Activated CD4-positive, alpha-beta memory T cell treated with anti-CD3 and anti-CD28 coated beads for 36 hours (primary cell): ENCODE measurements at regions of chr16 and their contacts with region 1.

Region 1: DNA sequence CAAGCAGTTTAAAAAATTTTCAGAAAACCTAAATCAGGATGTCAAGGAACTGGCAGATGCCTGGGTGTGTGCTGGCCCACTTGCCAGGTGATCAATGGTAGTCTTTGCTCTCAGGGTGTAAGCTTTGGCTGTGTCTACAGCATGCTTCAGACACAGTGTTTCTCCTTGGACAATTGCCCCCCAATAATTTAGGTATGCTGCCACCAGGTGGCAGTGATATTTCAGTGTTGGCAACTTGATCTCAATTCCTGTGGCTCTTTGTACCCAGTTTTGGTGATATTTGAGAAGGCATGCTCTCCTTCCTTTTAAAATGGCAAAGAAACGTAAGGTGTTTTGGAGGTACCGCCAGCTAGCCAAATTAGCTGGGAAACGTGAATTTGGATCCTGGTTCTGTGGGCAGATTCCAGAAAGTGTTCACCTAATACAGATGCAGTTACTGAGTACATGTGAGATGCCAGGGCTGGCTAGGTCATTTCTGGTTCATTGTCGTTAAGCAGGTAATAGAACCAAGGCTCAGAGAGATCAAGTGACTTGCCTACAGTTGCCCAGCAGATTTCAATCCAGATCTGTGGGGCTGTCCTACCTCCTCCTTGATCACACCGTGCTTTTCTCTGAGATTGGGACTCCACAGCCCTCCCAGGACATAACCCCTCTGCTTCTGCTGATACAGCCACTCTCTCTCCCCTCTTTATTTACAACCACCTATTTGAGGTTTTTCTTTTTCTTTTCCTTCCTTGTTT is 155.6 kb upstream of the PLCG2 start:
- DNase-seq: peak; percentile 73
- H3K4me3 Mint-ChIP-seq: no peak overlapping the region
- H3K27ac Mint-ChIP-seq: peak overlapping the region; percentile 8
- H3K4me1 Mint-ChIP-seq: peaks cover 9% of the 10 kb centered on the region
- H3K27me3 Mint-ChIP-seq: no peaks in the 10 kb centered on the region

Region 2: DNA sequence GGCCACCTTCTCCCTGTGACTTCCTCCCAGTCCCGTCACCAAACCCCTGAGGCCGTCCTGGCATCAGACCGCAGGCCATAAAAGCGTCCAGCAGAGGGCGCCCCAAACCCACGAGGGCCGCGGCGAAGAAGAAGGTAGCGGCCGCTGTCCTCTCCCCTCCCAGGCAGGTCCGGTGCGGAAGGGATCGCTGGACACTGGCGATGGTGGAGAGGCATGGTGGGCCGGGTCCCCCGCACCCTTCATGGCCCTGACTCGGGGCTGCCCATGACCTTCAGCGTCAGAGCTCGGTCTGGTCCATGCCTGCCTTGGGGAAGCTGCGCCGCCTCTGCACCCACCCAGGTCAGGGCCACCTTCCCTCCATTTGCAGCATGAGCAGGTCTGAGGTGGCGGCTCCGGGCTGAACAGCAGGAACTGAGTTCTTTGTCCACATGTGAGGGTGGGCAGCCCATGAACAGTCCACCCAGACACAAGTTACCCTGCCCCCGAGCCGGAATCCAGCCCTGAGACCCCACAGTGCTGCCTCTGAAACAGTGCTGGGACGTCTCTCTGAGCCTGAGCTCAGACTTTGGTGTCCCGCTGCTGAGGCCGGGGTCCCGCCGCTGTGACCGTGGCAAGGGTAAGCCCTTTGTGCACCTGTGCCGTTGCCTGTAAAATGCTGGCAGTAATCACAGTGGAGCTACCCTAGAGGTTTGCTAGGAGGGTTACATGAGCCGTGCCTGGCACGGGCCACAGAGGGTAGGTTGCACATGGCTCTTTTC is 219.7 kb before region 1 on chr16:
- CTCF ChIA-PET with region 1: interaction called, 15 read pairs
- POLR2A ChIA-PET with region 1: no interaction called
- intact Hi-C with region 1: no loop called
- DNase-seq: peak; percentile 89
- H3K4me3 Mint-ChIP-seq: no peak overlapping the region
- H3K27ac Mint-ChIP-seq: no peak overlapping the region
- H3K4me1 Mint-ChIP-seq: no peaks in the 10 kb centered on the region
- H3K27me3 Mint-ChIP-seq: no peaks in the 10 kb centered on the region

Region 3: GRCh38 chr16:81595604-81596292 is 27.8 kb before region 1 on chr16:
- CTCF ChIA-PET with region 1: interaction called, 3 read pairs
- POLR2A ChIA-PET with region 1: no interaction called
- intact Hi-C with region 1: loop called (anchors 1 kb)
- DNase-seq: no peak
- H3K4me3 Mint-ChIP-seq: no peak overlapping the region
- H3K27ac Mint-ChIP-seq: peak overlapping the region; percentile 78
- H3K4me1 Mint-ChIP-seq: peaks cover 12% of the 10 kb centered on the region
- H3K27me3 Mint-ChIP-seq: no peaks in the 10 kb centered on the region

Region 4: GRCh38 chr16:81715358-81716196 is 92.0 kb after region 1 on chr16:
- CTCF ChIA-PET with region 1: interaction called, 30 read pairs
- POLR2A ChIA-PET with region 1: no interaction called
- intact Hi-C with region 1: no loop called
- DNase-seq: peak; percentile 40
- H3K4me3 Mint-ChIP-seq: peak overlapping the region; percentile 34
- H3K27ac Mint-ChIP-seq: peak overlapping the region; percentile 57
- H3K4me1 Mint-ChIP-seq: peaks cover 44% of the 10 kb centered on the region
- H3K27me3 Mint-ChIP-seq: no peaks in the 10 kb centered on the region

Region 5: DNA sequence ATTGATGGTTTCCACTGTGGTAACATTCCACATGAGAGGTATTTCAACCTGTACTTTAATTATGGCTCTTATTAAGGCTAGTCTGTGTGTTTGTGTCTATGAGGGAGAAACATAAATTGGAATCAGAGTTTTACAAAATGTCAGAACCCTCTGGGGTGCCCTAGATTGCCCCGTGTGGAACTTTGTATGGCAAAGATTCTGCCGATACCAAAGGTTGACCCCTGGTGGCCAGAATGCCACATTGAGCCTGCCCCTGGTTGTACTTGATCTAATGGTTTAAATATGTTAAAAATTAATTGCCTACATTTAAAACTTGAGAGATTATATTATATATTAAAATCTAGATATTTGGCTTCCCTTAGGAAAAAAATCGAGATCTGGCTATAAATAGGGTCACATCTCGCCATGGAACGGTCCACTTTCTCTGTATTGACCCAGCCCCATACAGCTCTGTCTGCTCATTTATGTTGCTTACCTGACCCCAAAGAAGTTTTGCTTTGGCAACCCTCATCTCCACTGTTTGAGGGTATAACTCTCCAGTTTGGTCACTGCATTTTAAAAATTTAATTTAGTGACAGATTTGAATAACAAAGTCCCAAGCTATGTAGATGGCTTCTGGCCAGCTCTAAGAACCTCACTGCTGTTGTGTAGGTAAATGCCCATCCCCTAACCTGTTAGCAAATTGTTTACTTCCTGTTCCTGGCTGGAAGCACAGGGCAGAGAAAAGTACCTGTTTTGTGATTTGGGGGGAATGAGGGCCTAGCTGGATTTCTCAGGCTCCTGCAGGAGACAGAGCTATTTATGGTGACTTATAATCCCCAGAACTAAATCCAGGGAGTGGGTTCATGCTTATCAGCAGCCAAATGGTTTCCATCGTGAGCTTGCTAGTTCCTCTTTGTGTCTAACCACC is 250.6 kb after region 1 on chr16:
- CTCF ChIA-PET with region 1: no interaction called
- POLR2A ChIA-PET with region 1: no interaction called
- intact Hi-C with region 1: loop called (anchors 10 kb)
- DNase-seq: peak; percentile 74
- H3K4me3 Mint-ChIP-seq: no peak overlapping the region
- H3K27ac Mint-ChIP-seq: no peak overlapping the region
- H3K4me1 Mint-ChIP-seq: peaks cover 10% of the 10 kb centered on the region
- H3K27me3 Mint-ChIP-seq: no peaks in the 10 kb centered on the region